ENCODE measurements at regions of chr1 and their contacts with region 1.

Region 1: GRCh38 chr1:160951443-160952128 is 3.0 kb downstream of the ITLN2 start:
- DNase-seq: peak; percentile 81
- H3K4me3 Mint-ChIP-seq: no peak overlapping the region
- H3K27ac Mint-ChIP-seq: no peak overlapping the region
- H3K4me1 Mint-ChIP-seq: peaks cover 2% of the 10 kb centered on the region
- H3K27me3 Mint-ChIP-seq: no peaks in the 10 kb centered on the region

Region 2: GRCh38 chr1:160795951-160796383 is 155.6 kb before region 1 on chr1 and contains the start of gene LY9:
- CTCF ChIA-PET with region 1: interaction called, 10 read pairs
- POLR2A ChIA-PET with region 1: no interaction called
- intact Hi-C with region 1: no loop called
- DNase-seq: peak; percentile 90
- H3K4me3 Mint-ChIP-seq: peak within 1 kb of the TSS; percentile 77
- H3K27ac Mint-ChIP-seq: peak within 1 kb of the TSS; percentile 88
- H3K4me1 Mint-ChIP-seq: peaks cover 61% of the 10 kb centered on the region
- H3K27me3 Mint-ChIP-seq: no peaks in the 10 kb centered on the region
- total RNA-seq, gene LY9: 4.8 to 4.9 TPM

Region 3: DNA sequence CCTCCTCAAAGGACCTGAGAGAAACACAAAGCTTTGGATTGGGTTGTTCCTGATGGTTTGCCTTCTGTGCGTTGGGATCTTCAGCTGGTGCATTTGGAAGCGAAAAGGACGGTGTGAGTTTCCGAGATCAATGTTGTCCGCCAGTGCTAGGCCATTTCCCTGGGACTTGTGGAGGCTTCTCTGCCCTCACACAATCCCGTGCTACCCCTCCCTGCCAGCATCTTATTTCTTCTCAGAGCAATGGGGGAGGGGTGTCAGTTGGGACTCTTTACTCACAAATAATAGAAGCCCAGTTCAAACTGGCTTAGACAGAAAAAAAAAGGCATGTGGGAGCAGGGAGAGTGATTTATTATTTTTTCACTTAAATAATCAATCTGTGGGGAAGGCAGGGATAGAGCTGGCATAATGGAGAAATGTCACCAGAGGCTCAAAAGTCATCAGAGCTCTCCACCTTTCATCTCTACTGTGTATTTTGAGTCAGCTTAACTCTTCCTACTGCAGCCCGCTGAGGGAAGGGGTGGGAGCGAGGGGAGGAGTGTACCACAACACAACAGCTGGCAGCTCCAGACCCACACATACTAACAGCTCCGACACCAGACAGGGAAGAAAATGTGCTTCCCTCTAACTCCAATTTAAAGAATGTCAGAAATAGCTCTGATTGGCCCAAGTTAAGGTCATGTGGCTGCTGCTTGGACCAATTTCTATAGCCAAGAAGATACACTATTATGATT is 133.2 kb before region 1 on chr1:
- CTCF ChIA-PET with region 1: interaction called, 11 read pairs
- POLR2A ChIA-PET with region 1: no interaction called
- intact Hi-C with region 1: no loop called
- DNase-seq: no peak
- H3K4me3 Mint-ChIP-seq: no peak overlapping the region
- H3K27ac Mint-ChIP-seq: no peak overlapping the region
- H3K4me1 Mint-ChIP-seq: peaks cover 4% of the 10 kb centered on the region
- H3K27me3 Mint-ChIP-seq: no peaks in the 10 kb centered on the region

Region 4: GRCh38 chr1:160830321-160831153 is 121.0 kb before region 1 on chr1:
- CTCF ChIA-PET with region 1: interaction called, 296 read pairs
- POLR2A ChIA-PET with region 1: interaction called, 4 read pairs
- intact Hi-C with region 1: loop called (anchors 1 kb)
- DNase-seq: peak; percentile 86
- H3K4me3 Mint-ChIP-seq: no peak overlapping the region
- H3K27ac Mint-ChIP-seq: no peak overlapping the region
- H3K4me1 Mint-ChIP-seq: peaks cover 12% of the 10 kb centered on the region
- H3K27me3 Mint-ChIP-seq: no peaks in the 10 kb centered on the region

Region 5: DNA sequence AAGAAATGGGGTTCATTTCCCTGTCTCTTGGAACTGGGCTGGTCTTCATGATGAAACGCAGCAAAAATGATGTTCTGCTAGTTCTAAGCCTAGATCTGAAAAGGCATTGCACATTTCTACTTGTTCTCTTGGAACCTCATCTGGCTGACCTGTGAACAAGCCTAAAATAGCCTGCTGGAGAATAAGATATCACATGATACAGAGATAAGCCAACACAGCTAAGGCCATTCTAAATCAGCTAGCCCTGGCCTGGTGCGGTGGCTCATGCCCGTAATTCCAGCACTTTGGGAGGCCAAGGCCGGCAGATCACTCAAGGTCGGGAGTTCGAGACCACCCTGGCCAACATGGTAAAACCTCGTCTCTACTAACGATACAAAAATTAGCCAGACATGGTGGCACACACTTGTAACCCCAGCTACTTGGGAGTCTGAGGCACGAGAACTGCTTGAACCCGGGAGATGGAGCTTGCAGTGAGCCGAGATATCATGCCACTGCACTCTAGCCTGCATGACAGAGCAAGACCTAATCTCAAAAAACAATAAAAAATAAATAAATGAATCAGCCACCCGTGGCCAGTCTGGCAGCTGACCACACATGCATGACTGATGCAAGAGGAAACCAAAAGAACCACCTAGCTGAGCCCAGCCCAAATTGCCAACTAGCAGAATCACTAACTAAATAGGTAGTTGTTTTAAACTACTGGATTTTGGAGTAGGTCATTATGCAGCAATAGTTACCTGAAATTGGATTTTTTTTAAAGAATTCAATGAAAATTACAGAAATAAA is 106.9 kb before region 1 on chr1:
- CTCF ChIA-PET with region 1: interaction called, 296 read pairs
- POLR2A ChIA-PET with region 1: no interaction called
- intact Hi-C with region 1: no loop called
- DNase-seq: no peak
- H3K4me3 Mint-ChIP-seq: no peak overlapping the region
- H3K27ac Mint-ChIP-seq: no peak overlapping the region
- H3K4me1 Mint-ChIP-seq: peaks cover 2% of the 10 kb centered on the region
- H3K27me3 Mint-ChIP-seq: no peaks in the 10 kb centered on the region

Region 6: DNA sequence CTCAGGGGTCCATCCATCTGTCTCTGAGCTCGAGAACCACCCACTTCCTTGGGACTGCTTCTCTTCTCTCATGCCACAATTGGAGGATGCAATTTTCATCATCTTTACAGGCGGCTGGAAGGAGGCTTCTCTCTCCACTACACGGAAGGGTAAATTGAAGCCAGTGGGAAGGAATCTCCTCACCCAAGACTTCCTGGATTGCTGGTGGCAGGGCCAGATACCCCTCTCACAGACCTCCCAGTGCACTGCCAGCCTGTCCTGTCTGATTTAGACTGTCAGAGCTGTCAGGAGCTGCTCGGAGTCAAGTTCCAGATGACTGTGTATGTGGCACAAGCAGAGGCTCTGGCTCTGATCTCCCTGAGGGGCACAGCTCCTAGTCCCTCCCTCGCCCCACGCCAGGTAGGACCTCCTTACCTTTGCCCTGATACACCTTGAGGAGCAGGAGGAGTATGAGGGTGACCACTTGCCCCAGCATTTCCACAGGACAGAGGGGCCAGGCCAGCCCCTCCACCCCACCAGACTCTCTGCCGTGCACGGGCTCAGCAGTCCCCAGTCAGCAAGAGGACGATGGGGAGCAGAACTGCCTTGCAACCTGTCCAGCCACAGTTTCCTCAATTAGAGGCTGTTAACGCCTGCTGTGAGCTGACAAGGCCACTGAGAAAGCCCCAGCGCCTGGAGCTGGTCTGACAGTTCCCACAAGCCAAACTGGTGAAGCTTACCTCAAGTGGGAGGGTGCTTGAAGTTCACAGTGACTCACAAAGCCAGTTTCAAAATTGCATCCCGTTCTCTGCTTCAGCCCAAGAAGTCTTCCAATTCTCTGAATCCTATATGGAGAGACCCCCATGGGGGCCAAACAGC is 89.2 kb before region 1 on chr1 and contains the start of gene CD244:
- CTCF ChIA-PET with region 1: interaction called, 10 read pairs
- POLR2A ChIA-PET with region 1: no interaction called
- intact Hi-C with region 1: no loop called
- DNase-seq: peak; percentile 80
- H3K4me3 Mint-ChIP-seq: no peak within 1 kb of the TSS
- H3K27ac Mint-ChIP-seq: no peak within 1 kb of the TSS
- H3K4me1 Mint-ChIP-seq: peaks cover 19% of the 10 kb centered on the region
- H3K27me3 Mint-ChIP-seq: peaks cover 2% of the 10 kb centered on the region
- total RNA-seq, gene CD244: 0.14 TPM in 1 of 2 experiments, not detected in the other

Measured in activated CD4-positive, alpha-beta memory T cell treated with anti-CD3 and anti-CD28 coated beads for 36 hours (primary cell).